ENCODE measurements at regions of chr5 and their contacts with region 1.

Region 1: DNA sequence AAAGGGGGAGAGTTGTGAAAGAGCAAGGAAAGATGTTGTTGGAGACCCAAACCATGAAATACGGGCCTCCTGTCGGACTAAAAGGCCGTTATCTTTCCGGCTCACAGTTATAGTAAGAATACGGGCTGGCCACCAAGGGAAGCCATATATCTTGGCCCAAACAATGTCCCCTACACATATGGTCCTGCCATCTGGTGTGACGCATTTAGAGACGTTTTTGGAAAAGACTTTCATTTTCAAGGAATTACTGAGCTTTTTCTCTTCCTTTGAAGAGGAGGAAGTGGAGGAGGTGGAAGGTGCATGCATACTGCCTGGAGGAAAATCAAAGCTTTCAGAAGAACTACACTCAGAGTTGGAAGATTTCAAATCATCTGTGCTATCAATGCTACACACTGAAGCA is 26.7 kb downstream of the PWWP2A start:
- DNase-seq: no peak
- ATAC-seq: no peak
- H3K4me3 Mint-ChIP-seq: no peak overlapping the region
- H3K27ac Mint-ChIP-seq: no peak overlapping the region
- H3K4me1 Mint-ChIP-seq: peaks cover 12% of the 10 kb centered on the region
- H3K27me3 Mint-ChIP-seq: no peaks in the 10 kb centered on the region
- CTCF ChIP-seq: no peak

Region 2: GRCh38 chr5:159100025-159100781 is 992.3 kb before region 1 on chr5:
- CTCF ChIA-PET with region 1: no interaction called
- POLR2A ChIA-PET with region 1: no interaction called
- intact Hi-C with region 1: no loop called
- DNase-seq: peak; percentile 86
- ATAC-seq: peak; percentile 84
- H3K4me3 Mint-ChIP-seq: peak overlapping the region; percentile 76
- H3K27ac Mint-ChIP-seq: no peak overlapping the region
- H3K4me1 Mint-ChIP-seq: peaks cover 34% of the 10 kb centered on the region
- H3K27me3 Mint-ChIP-seq: peaks cover 57% of the 10 kb centered on the region
- CTCF ChIP-seq: no peak

Region 3: DNA sequence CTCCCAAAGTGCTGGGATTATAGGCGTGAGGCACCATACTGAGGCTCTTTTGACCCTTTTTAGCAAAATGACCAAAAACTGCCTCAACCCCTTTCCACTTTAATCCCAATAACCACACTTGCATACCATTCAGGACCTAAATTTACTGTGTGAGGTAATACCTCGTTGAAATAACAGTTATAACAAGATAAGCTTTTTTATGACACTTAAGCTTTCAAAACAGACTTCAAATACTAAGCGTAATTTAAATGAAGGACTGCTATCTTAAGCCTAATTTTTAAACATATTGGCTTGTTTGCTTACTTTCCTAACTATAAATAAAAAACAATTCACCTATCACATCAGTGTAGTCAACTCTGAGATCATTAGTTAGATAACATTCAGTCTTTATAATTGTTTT is 11.0 kb before region 1 on chr5:
- CTCF ChIA-PET with region 1: interaction called, 11 read pairs
- POLR2A ChIA-PET with region 1: no interaction called
- intact Hi-C with region 1: no loop called
- DNase-seq: no peak
- ATAC-seq: no peak
- H3K4me3 Mint-ChIP-seq: no peak overlapping the region
- H3K27ac Mint-ChIP-seq: no peak overlapping the region
- H3K4me1 Mint-ChIP-seq: no peaks in the 10 kb centered on the region
- H3K27me3 Mint-ChIP-seq: no peaks in the 10 kb centered on the region
- CTCF ChIP-seq: no peak